GM18951 (cell line): ENCODE measurements at regions of chr7 and their contacts with region 1.

Region 1: DNA sequence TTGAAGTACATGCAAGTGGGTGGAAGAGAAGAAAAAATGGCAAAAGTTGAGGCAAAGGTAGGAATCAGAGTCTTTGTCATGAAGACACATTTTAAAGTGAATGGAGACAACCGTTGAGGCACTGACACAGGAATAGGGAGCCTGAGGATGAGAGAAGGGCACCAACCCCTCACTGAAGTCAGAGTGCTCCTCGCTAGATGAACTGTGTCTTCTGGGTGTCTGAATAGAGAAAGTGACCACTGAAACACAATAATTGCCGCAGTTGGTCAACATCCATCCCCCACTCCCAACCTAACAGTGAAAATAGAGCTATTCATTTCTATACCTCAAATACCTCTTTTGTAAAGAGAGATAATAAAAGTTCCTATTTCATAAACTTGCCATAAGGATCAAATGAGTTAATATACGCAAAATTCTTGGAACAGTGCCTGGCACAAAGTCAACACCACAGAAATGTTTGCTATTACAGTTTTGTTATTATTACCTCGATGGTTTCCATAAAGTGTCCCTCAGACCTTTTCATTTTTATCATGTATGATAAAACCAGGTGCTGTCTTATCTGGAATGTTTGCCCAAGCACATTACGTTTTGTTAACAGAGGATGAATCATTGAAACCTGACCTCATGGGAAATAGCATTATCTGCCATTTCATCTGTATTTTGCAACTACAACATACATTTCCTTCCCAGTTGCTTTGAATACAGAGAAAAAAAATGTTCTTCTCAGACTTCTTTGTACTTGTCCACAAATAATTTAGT is 61.8 kb upstream of the SP4 start:
- POLR2A ChIP-seq: no peak

Region 2: DNA sequence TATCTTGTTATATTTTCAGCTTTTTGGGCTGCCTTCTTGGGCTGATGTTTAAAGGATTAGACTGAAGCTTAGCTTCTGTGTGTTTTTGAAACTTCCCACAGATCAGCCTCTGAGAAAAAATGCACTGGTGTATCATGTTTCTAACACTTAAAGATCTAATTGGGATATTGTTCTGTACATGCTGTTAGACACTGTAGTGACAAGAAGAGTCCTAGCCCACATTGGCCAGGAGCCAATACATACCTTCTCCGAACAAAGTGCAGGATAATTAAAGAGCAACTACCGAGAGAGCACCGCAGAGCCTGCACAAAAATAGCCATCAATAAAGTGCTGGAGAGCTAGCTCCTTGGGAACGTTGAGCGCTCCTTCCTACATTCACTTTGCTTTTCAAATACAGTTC is 290.0 kb before region 1 on chr7:
- in situ Hi-C with region 1: no loop called
- POLR2A ChIP-seq: no peak

Region 3: GRCh38 chr7:21221129-21221528 is 144.9 kb before region 1 on chr7:
- in situ Hi-C with region 1: no loop called
- POLR2A ChIP-seq: no peak

Region 4: GRCh38 chr7:22697876-22698606 is 1332.0 kb after region 1 on chr7:
- in situ Hi-C with region 1: loop called (anchors 10 kb)
- POLR2A ChIP-seq: no peak